OCI-LY7 (cell line): ENCODE measurements at regions of chr20 and their contacts with region 1.

Region 1: DNA sequence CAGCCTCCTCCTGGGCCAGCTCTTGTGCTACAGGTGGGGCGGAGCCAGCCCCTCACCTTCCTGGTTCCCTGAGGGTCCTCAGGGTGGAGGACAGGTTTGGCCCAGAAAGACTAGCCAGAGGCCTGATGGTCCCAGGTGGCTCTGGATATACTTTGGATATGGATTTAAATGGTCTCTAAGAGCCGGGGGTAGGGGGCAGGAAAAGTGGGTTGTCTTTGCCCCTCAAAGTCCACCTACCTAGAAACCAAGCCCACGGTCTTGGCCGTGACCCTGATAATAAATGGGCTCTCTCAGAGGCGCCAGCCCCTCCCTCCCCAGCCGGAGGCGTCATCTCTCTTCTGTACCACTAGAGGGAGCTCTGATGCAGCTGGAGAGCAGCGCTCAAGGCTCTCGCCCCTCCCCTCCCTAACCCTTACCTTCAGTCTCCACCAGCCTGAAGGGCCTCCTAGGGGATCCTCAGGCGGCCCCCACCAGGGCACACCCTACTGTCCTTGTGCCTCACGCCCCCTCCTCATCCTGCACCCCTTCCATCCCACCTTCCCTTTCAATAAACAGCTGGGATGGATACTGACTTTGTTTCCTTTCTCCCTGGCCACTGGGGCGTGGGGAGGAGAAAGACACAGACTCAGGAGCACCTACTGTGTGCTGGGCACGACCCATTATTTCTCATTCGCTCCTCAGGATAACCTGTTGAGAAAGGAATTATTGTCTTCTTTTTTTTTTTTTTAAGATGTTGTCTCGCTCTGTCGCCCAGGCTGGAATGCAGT is 7.6 kb downstream of the NRSN2 start:
- DNase-seq: peak; percentile 89
- H3K4me3 ChIP-seq: no peak overlapping the region
- H3K27ac ChIP-seq: no peak overlapping the region
- H3K4me1 ChIP-seq: peaks cover 26% of the 10 kb centered on the region
- CTCF ChIP-seq: peak; percentile 96

Region 2: GRCh38 chr20:164618-165017 is 189.9 kb before region 1 on chr20:
- CTCF ChIA-PET with region 1: no interaction called
- POLR2A ChIA-PET with region 1: no interaction called
- intact Hi-C with region 1: no loop called
- DNase-seq: no peak
- H3K4me3 ChIP-seq: no peak overlapping the region
- H3K27ac ChIP-seq: no peak overlapping the region
- H3K4me1 ChIP-seq: no peaks in the 10 kb centered on the region
- CTCF ChIP-seq: no peak

Region 3: GRCh38 chr20:407133-407952 is 52.9 kb after region 1 on chr20:
- CTCF ChIA-PET with region 1: no interaction called
- POLR2A ChIA-PET with region 1: interaction called, 3 read pairs
- intact Hi-C with region 1: loop called (anchors 2 kb)
- DNase-seq: peak; percentile 85
- H3K4me3 ChIP-seq: peak overlapping the region; percentile 69
- H3K27ac ChIP-seq: peak overlapping the region; percentile 84
- H3K4me1 ChIP-seq: peaks cover 51% of the 10 kb centered on the region
- CTCF ChIP-seq: peak; percentile 77

Region 4: GRCh38 chr20:431012-431904 is 76.8 kb after region 1 on chr20:
- CTCF ChIA-PET with region 1: no interaction called
- POLR2A ChIA-PET with region 1: interaction called, 3 read pairs
- intact Hi-C with region 1: loop called (anchors 1 kb)
- DNase-seq: peak; percentile 83
- H3K4me3 ChIP-seq: no peak overlapping the region
- H3K27ac ChIP-seq: no peak overlapping the region
- H3K4me1 ChIP-seq: peaks cover 5% of the 10 kb centered on the region
- CTCF ChIP-seq: peak; percentile 86

Region 5: GRCh38 chr20:478949-479429 is 124.5 kb after region 1 on chr20:
- CTCF ChIA-PET with region 1: no interaction called
- POLR2A ChIA-PET with region 1: no interaction called
- intact Hi-C with region 1: loop called (anchors 1 kb)
- DNase-seq: peak; percentile 80
- H3K4me3 ChIP-seq: no peak overlapping the region
- H3K27ac ChIP-seq: no peak overlapping the region
- H3K4me1 ChIP-seq: no peaks in the 10 kb centered on the region
- CTCF ChIP-seq: peak; percentile 90

Region 6: GRCh38 chr20:645318-646106 is 291.0 kb after region 1 on chr20:
- CTCF ChIA-PET with region 1: no interaction called
- POLR2A ChIA-PET with region 1: interaction called, 3 read pairs
- intact Hi-C with region 1: loop called (anchors 1 kb)
- DNase-seq: peak; percentile 76
- H3K4me3 ChIP-seq: no peak overlapping the region
- H3K27ac ChIP-seq: no peak overlapping the region
- H3K4me1 ChIP-seq: peaks cover 3% of the 10 kb centered on the region
- CTCF ChIP-seq: peak; percentile 94